G401 (cell line): ENCODE measurements at regions of chr17 and their contacts with region 1.

Region 1: GRCh38 chr17:8119581-8120519 is 1.5 kb upstream of the ALOXE3 start:
- DNase-seq: peak; percentile 95

Region 2: GRCh38 chr17:8189711-8190477 is 70.0 kb after region 1 on chr17 and contains the start of gene BORCS6:
- in situ Hi-C with region 1: loop called (anchors 5 kb)
- DNase-seq: peak; percentile 100
- total RNA-seq, gene BORCS6: 24.3 and 25.6 TPM in 2 replicates